CD8-positive, alpha-beta T cell (primary cell): ENCODE measurements at regions of chr6 and their contacts with region 1.

Region 1: GRCh38 chr6:20589266-20589665 is 55.0 kb downstream of the CDKAL1 start:
- DNase-seq: no peak
- ATAC-seq: no peak
- H3K4me3 ChIP-seq: no peak overlapping the region
- H3K4me3 Mint-ChIP-seq: no peak overlapping the region
- H3K27ac ChIP-seq: no peak overlapping the region
- H3K27ac Mint-ChIP-seq: no peak overlapping the region
- H3K4me1 ChIP-seq: no peaks in the 10 kb centered on the region
- H3K4me1 Mint-ChIP-seq: peaks cover 21% of the 10 kb centered on the region
- H3K27me3 ChIP-seq: no peaks in the 10 kb centered on the region
- H3K27me3 Mint-ChIP-seq: no peaks in the 10 kb centered on the region
- CTCF ChIP-seq: no peak

Region 2: GRCh38 chr6:20038410-20039204 is 550.7 kb before region 1 on chr6:
- CTCF ChIA-PET with region 1: no interaction called
- POLR2A ChIA-PET with region 1: no interaction called
- intact Hi-C with region 1: loop called in 1 of 2 experiments (anchors 5 kb)
- DNase-seq: no peak
- ATAC-seq: no peak
- H3K4me3 ChIP-seq: no peak overlapping the region
- H3K4me3 Mint-ChIP-seq: no peak overlapping the region
- H3K27ac ChIP-seq: no peak overlapping the region
- H3K27ac Mint-ChIP-seq: no peak overlapping the region
- H3K4me1 ChIP-seq: no peaks in the 10 kb centered on the region
- H3K4me1 Mint-ChIP-seq: no peaks in the 10 kb centered on the region
- H3K27me3 ChIP-seq: no peaks in the 10 kb centered on the region
- H3K27me3 Mint-ChIP-seq: peaks cover 7% of the 10 kb centered on the region
- CTCF ChIP-seq: no peak

Region 3: GRCh38 chr6:20757761-20758160 is 168.5 kb after region 1 on chr6:
- CTCF ChIA-PET with region 1: no interaction called
- POLR2A ChIA-PET with region 1: no interaction called
- intact Hi-C with region 1: no loop called
- DNase-seq: no peak
- ATAC-seq: no peak
- H3K4me3 ChIP-seq: no peak overlapping the region
- H3K4me3 Mint-ChIP-seq: no peak overlapping the region
- H3K27ac ChIP-seq: no peak overlapping the region
- H3K27ac Mint-ChIP-seq: no peak overlapping the region
- H3K4me1 ChIP-seq: no peaks in the 10 kb centered on the region
- H3K4me1 Mint-ChIP-seq: peaks cover 12% of the 10 kb centered on the region
- H3K27me3 ChIP-seq: no peaks in the 10 kb centered on the region
- H3K27me3 Mint-ChIP-seq: no peaks in the 10 kb centered on the region
- CTCF ChIP-seq: no peak

Region 4: DNA sequence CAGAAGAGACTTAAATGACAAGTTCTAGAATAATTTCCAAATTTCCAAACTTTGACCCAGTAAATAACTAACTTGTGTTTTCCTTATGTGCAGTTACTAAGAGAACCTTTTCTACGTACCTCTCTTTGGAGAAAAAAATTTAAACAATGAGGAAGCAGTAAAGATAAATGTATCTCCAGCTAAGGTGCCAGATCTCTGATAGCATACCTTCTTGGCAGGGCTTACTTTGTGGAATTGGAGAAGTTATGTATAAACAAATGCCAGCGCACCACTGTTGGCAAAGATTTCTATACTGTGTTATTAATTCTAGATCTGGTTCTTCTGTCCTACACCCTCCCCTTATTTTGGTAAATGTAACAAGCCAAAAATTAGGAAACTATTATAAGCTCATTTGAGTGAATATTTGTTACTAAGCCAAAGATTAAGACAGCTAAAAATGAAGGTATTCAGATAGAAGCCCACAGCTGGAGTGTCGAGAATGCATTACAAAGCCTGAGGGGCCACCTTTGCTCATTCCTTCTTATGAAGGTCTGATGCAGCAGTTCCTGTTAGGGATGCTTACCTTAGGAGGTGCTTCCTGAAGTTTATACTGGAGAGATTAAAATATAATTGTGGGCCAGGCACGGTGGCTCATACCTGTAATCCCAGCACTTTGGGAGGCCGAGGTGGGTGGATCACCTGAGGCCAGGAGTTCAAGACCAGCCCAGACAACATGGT is 631.2 kb after region 1 on chr6:
- CTCF ChIA-PET with region 1: no interaction called
- POLR2A ChIA-PET with region 1: no interaction called
- intact Hi-C with region 1: no loop called
- DNase-seq: no peak
- ATAC-seq: no peak
- H3K4me3 ChIP-seq: no peak overlapping the region
- H3K4me3 Mint-ChIP-seq: no peak overlapping the region
- H3K27ac ChIP-seq: no peak overlapping the region
- H3K27ac Mint-ChIP-seq: no peak overlapping the region
- H3K4me1 ChIP-seq: no peaks in the 10 kb centered on the region
- H3K4me1 Mint-ChIP-seq: no peaks in the 10 kb centered on the region
- H3K27me3 ChIP-seq: no peaks in the 10 kb centered on the region
- H3K27me3 Mint-ChIP-seq: no peaks in the 10 kb centered on the region
- CTCF ChIP-seq: no peak

Region 5: GRCh38 chr6:21277601-21278374 is 688.5 kb after region 1 on chr6:
- CTCF ChIA-PET with region 1: no interaction called
- POLR2A ChIA-PET with region 1: no interaction called
- intact Hi-C with region 1: no loop called
- DNase-seq: no peak
- ATAC-seq: no peak
- H3K4me3 ChIP-seq: no peak overlapping the region
- H3K4me3 Mint-ChIP-seq: no peak overlapping the region
- H3K27ac ChIP-seq: no peak overlapping the region
- H3K27ac Mint-ChIP-seq: no peak overlapping the region
- H3K4me1 ChIP-seq: no peaks in the 10 kb centered on the region
- H3K4me1 Mint-ChIP-seq: no peaks in the 10 kb centered on the region
- H3K27me3 ChIP-seq: no peaks in the 10 kb centered on the region
- H3K27me3 Mint-ChIP-seq: no peaks in the 10 kb centered on the region
- CTCF ChIP-seq: no peak